AG04449 (cell line): ENCODE measurements at regions of chr6 and their contacts with region 1.

Region 1: GRCh38 chr6:134161036-134161435 is 108.6 kb upstream of the SLC2A12 start:
- DNase-seq: no peak
- H3K4me3 ChIP-seq: no peak overlapping the region
- CTCF ChIP-seq: no peak

Region 2: GRCh38 chr6:134123666-134124208 is 37.3 kb before region 1 on chr6:
- CTCF ChIA-PET with region 1: interaction called, 10 read pairs
- POLR2A ChIA-PET with region 1: no interaction called
- DNase-seq: no peak
- H3K4me3 ChIP-seq: no peak overlapping the region
- CTCF ChIP-seq: peak; percentile 45

Region 3: DNA sequence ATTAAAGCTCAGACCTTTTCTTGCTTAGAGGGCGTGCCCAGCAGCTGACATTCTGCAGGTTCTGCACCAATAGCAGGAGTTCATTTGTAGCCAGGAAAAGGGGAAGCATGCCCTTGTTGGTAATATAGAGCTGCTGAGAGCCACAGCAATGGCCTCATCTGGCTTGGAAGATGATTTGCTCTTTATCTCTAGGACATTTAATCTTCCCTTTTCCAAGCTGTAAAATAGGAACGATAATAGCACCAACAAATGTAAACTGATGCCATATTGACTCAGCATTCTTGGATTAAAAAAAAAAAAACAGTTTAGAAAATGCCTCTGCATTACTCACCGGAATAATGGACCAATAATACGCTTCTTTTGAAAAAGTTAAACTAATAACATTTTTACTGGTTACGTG is 15.2 kb before region 1 on chr6:
- CTCF ChIA-PET with region 1: interaction called, 21 read pairs
- POLR2A ChIA-PET with region 1: no interaction called
- DNase-seq: no peak
- H3K4me3 ChIP-seq: no peak overlapping the region
- CTCF ChIP-seq: no peak

Region 4: DNA sequence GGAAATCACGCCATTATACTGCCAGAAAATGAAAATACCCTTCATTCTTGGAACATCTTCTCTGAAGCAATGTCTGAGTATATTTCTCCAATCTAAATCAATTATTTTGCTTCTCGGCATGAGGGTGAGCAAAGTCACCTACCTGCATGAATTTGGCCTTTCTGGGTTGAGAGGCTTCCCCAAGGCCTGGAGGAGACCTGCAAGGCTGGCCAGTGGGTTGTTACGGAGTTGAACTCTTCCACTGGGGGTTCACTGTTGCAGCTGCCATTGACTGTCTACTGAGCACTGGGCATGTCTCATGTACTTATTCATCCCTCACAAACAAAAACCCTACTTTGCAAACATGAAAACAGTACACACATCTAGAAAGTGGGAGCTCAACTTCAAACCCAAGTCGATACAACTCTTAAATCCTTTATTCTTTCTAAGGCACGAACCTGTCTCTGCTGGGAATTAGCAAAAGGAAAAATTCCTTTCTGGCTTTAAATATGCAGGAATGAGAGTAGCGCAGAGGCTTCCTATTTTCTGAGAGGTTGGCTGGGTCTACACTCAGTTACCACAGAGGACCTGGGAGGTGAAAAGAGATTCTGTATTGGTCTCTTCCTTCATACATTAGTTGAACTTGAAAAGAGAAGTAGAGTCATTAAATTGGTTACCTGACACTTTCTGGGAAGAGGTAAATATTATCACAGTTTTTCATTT is 244.5 kb after region 1 on chr6:
- CTCF ChIA-PET with region 1: no interaction called
- POLR2A ChIA-PET with region 1: no interaction called
- DNase-seq: no peak
- H3K4me3 ChIP-seq: no peak overlapping the region
- CTCF ChIP-seq: no peak

Region 5: GRCh38 chr6:134870677-134871498 is 709.9 kb after region 1 on chr6:
- CTCF ChIA-PET with region 1: interaction called, 10 read pairs
- POLR2A ChIA-PET with region 1: no interaction called
- DNase-seq: no peak
- H3K4me3 ChIP-seq: no peak overlapping the region
- CTCF ChIP-seq: no peak

Region 6: GRCh38 chr6:134950482-134950881 is 789.4 kb after region 1 on chr6:
- CTCF ChIA-PET with region 1: interaction called, 150 read pairs
- POLR2A ChIA-PET with region 1: no interaction called
- DNase-seq: no peak
- H3K4me3 ChIP-seq: no peak overlapping the region
- CTCF ChIP-seq: no peak